ENCODE measurements at regions of chr3 and their contacts with region 1.

Region 1: GRCh38 chr3:191051037-191051436 is 148.0 kb upstream of the OSTN start:
- DNase-seq: peak; percentile 28 to 56 (median 46)
- H3K4me3 ChIP-seq: no peak overlapping the region
- H3K27ac ChIP-seq: no peak overlapping the region
- H3K4me1 ChIP-seq: no peaks in the 10 kb centered on the region
- H3K27me3 ChIP-seq: peaks cover 0 to 6% (median 0%) of the 10 kb centered on the region in 5 experiments

Region 2: GRCh38 chr3:190811775-190812480 is 239.1 kb before region 1 on chr3:
- CTCF ChIA-PET with region 1: interaction called, 71 read pairs
- POLR2A ChIA-PET with region 1: no interaction called
- DNase-seq: peak; percentile 39 to 67 (median 62)
- H3K4me3 ChIP-seq: no peak overlapping the region
- H3K27ac ChIP-seq: no peak overlapping the region
- H3K4me1 ChIP-seq: no peaks in the 10 kb centered on the region
- H3K27me3 ChIP-seq: peaks cover 0 to 14% (median 2%) of the 10 kb centered on the region in 5 experiments

Region 3: GRCh38 chr3:190883973-190884832 is 166.8 kb before region 1 on chr3:
- CTCF ChIA-PET with region 1: interaction called, 79 read pairs
- POLR2A ChIA-PET with region 1: no interaction called
- DNase-seq: peak; percentile 52 to 79 (median 70)
- H3K4me3 ChIP-seq: no peak overlapping the region
- H3K27ac ChIP-seq: no peak overlapping the region
- H3K4me1 ChIP-seq: no peaks in the 10 kb centered on the region
- H3K27me3 ChIP-seq: peaks cover 0 to 8% (median 0%) of the 10 kb centered on the region in 5 experiments

Region 4: DNA sequence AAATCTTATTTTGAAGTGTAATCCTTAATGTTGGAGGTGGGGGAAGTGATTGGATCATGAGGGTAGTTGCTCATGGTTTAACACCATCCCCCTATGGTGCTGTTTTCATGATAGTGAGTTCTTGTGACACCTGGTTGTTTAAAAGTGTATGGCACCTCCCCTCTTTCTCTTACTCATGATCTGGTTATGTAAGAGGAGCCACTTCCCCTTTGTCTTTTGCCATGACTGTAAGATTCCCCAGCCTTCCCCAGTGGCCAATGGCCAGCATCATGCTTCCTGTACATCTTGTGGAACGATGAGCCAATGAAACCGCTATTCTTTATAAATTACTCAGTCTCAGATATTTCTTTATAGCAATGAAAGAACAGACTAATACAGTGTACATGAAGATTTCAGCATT is 148.7 kb before region 1 on chr3:
- CTCF ChIA-PET with region 1: no interaction called
- POLR2A ChIA-PET with region 1: no interaction called
- DNase-seq: peak in 2 of 3 donors; percentile 14 to 19
- H3K4me3 ChIP-seq: no peak overlapping the region
- H3K27ac ChIP-seq: no peak overlapping the region
- H3K4me1 ChIP-seq: no peaks in the 10 kb centered on the region
- H3K27me3 ChIP-seq: no peaks in the 10 kb centered on the region

Region 5: DNA sequence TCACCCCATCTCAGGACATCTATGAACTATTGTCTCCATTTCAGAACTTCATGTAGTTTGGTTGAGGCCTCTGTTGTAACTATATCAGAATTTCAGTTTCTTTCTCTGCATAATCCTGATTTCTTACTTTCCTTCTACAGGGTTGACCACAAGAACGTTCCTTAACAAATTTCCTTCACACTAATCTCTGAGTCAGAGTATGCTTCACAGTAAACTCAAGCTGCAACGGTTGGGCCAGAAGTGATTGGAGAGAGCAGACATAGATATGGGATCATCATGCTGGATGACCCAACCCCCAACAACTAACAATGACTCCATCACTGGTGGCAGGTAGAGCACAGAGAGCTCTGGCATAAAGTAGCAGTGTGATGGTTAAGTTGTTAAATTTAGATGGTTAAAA is 19.2 kb after region 1 on chr3:
- CTCF ChIA-PET with region 1: no interaction called
- POLR2A ChIA-PET with region 1: no interaction called
- DNase-seq: no peak
- H3K4me3 ChIP-seq: no peak overlapping the region
- H3K27ac ChIP-seq: no peak overlapping the region
- H3K4me1 ChIP-seq: no peaks in the 10 kb centered on the region
- H3K27me3 ChIP-seq: no peaks in the 10 kb centered on the region

Measured in common myeloid progenitor, CD34-positive (primary cell).